Caco-2 (cell line): ENCODE measurements at regions of chr5 and their contacts with region 1.

Region 1: DNA sequence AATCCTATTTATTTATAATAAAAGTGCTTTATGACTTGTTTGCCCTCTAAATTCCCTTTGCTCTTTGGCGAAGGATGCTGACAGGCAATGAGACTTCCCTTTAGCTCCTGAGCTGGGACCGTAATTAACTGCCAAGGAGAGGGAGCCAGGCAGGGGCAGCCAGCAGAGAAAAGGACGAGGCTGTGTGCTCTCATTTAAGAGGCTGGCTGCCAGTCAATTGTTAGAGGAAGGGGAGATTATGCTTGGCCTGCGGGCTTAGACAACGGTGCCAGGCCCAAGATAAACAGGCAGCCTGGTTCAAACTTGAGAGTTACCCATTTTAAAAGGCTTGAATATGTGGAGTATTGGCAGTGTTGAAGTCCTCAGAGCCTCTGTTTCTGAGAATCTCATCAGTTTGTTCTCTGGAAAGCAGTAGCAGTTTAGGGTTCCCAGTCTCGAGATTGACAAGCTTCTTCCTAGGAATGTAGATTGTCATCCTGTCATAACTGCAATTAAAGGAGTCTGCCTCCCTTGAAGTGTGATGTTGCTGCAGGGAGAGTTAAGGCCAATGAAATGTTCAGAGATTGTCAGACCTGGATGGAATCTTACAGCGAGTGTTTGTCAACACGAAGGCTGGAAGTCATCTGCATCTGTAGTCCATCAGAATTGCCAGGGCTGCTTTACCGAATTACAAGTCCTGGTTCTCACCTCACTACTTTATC is 113.2 kb downstream of the JAKMIP2 start:
- DNase-seq: peak in 1 of 2 experiments; percentile 21
- H3K4me3 ChIP-seq: no peak overlapping the region
- H3K4me3 Mint-ChIP-seq: no peak overlapping the region
- H3K27ac Mint-ChIP-seq: no peak overlapping the region
- H3K4me1 ChIP-seq: peaks cover 33% of the 10 kb centered on the region
- H3K4me1 Mint-ChIP-seq: peaks cover 14% of the 10 kb centered on the region
- H3K27me3 ChIP-seq: no peaks in the 10 kb centered on the region
- H3K27me3 Mint-ChIP-seq: no peaks in the 10 kb centered on the region
- CTCF ChIP-seq: no peak

Region 2: DNA sequence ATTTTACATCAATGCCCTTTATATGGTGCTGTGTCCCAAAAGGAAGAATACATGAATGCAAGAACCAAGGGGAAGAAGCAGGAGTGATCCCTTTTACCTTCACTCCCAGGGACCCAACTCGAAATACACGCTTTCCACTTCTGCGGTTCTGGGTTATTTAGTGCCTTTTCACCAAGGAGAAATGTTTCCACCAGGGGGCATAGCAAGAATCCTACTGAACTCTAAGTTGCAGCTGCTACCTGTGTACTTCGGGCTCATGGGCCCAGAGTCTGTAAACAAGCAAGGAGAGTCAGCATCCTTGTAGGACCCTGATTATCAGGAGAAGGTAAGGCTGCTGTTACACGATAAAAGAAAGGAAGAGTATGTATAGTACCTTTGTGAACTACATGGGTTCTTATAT is 205.1 kb before region 1 on chr5:
- CTCF ChIA-PET with region 1: no interaction called
- POLR2A ChIA-PET with region 1: no interaction called
- intact Hi-C with region 1: no loop called
- DNase-seq: peak in 1 of 2 experiments; percentile 60
- H3K4me3 ChIP-seq: no peak overlapping the region
- H3K4me3 Mint-ChIP-seq: no peak overlapping the region
- H3K27ac Mint-ChIP-seq: no peak overlapping the region
- H3K4me1 ChIP-seq: peaks cover 10% of the 10 kb centered on the region
- H3K4me1 Mint-ChIP-seq: no peaks in the 10 kb centered on the region
- H3K27me3 ChIP-seq: no peaks in the 10 kb centered on the region
- H3K27me3 Mint-ChIP-seq: no peaks in the 10 kb centered on the region
- CTCF ChIP-seq: peak in 1 of 2 experiments; percentile 53

Region 3: DNA sequence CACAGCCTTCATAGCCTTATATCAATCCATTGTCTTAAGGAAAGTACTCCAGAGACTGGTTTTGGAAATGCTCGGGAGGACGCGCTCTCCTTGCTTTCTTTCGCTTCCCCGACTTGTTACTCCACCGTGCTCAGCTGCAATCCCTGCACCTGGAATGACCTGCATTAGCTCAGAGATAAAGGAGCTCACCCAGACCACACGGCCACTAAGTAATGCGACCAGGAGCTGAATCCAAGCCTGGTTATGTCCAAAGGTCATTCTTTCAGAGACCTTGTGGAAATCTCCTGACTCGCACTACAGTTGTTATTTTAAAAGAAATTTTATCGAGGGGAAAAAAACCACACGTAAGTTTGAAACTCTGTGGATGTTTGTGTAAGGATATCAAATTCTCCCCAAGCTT is 24.1 kb before region 1 on chr5:
- CTCF ChIA-PET with region 1: no interaction called
- POLR2A ChIA-PET with region 1: no interaction called
- intact Hi-C with region 1: loop called (anchors 1 kb)
- DNase-seq: peak; percentile 46 to 60
- H3K4me3 ChIP-seq: peak overlapping the region; percentile 28; the same call in 1 of the 2 replicates
- H3K4me3 Mint-ChIP-seq: peak overlapping the region; percentile 65
- H3K27ac Mint-ChIP-seq: no peak overlapping the region
- H3K4me1 ChIP-seq: peaks cover 3% of the 10 kb centered on the region; the same call in 1 of the 2 replicates
- H3K4me1 Mint-ChIP-seq: peaks cover 12% of the 10 kb centered on the region
- H3K27me3 ChIP-seq: no peaks in the 10 kb centered on the region
- H3K27me3 Mint-ChIP-seq: no peaks in the 10 kb centered on the region
- CTCF ChIP-seq: no peak

Region 4: GRCh38 chr5:147713550-147714295 is 44.4 kb after region 1 on chr5:
- CTCF ChIA-PET with region 1: no interaction called
- POLR2A ChIA-PET with region 1: no interaction called
- intact Hi-C with region 1: no loop called
- DNase-seq: no peak
- H3K4me3 ChIP-seq: no peak overlapping the region
- H3K4me3 Mint-ChIP-seq: no peak overlapping the region
- H3K27ac Mint-ChIP-seq: no peak overlapping the region
- H3K4me1 ChIP-seq: no peaks in the 10 kb centered on the region
- H3K4me1 Mint-ChIP-seq: no peaks in the 10 kb centered on the region
- H3K27me3 ChIP-seq: no peaks in the 10 kb centered on the region
- H3K27me3 Mint-ChIP-seq: peaks cover 3% of the 10 kb centered on the region
- CTCF ChIP-seq: no peak

Region 5: DNA sequence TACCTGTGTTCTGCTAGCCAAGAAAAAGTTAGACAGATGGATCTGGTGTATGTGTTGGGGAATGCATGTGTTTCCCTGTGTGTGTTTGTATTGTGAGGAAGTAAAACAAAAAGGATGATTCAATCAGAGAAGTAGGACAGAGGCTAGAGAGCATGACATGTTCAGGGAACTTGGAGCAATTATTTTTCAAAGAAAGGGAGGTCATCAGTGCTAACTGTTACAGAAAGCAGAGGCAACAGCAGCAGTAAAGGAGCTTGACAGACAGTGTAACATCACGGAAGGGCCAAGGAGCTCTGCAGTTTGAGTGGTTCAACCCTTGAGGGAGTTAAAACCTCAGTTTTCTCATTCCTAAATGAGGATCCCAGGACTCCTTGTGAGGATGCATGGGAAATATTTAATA is 149.0 kb after region 1 on chr5:
- CTCF ChIA-PET with region 1: no interaction called
- POLR2A ChIA-PET with region 1: no interaction called
- intact Hi-C with region 1: no loop called
- DNase-seq: no peak
- H3K4me3 ChIP-seq: no peak overlapping the region
- H3K4me3 Mint-ChIP-seq: no peak overlapping the region
- H3K27ac Mint-ChIP-seq: no peak overlapping the region
- H3K4me1 ChIP-seq: peaks cover 2% of the 10 kb centered on the region; the same call in 1 of the 2 replicates
- H3K4me1 Mint-ChIP-seq: peaks cover 10% of the 10 kb centered on the region
- H3K27me3 ChIP-seq: no peaks in the 10 kb centered on the region
- H3K27me3 Mint-ChIP-seq: no peaks in the 10 kb centered on the region
- CTCF ChIP-seq: no peak

Region 6: DNA sequence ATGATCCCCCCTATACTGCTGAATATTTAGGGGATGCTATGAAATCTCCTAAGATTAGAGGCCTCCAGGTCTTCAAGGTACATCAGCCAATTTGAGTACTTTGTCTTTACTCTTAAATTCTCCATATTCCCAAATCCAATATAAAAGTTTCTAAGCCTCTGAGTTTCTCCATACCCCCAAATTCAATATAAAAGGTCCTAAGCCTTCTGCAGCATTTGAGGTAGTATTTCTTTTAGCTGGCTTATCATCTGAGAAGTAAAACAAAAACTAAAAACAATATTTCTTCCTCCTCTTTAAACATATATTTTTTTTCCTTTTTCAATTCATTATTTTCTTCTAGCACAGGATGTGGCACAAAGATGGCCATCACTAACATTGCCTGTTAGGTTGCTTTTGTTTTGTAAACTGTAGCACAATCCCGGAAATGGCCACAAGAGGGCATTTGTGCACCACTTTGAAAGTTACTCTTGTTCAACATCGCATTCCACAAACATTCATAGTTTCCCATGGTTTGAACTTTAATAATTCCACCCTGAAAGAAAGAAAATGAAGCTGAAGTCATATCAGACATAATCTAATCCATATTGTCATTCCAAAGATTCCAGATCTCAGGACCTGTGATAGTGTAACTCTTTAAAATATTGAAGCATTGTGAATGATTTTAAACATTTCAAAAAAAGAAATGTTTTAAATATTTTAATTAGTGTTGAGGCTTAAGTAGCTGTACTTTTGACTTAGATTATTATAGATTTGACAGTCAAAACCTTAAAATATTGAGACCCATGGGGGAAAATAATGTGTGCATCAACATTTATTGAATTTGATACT is 188.2 kb after region 1 on chr5:
- CTCF ChIA-PET with region 1: no interaction called
- POLR2A ChIA-PET with region 1: no interaction called
- intact Hi-C with region 1: no loop called
- DNase-seq: peak; percentile 66 to 71
- H3K4me3 ChIP-seq: no peak overlapping the region
- H3K4me3 Mint-ChIP-seq: no peak overlapping the region
- H3K27ac Mint-ChIP-seq: no peak overlapping the region
- H3K4me1 ChIP-seq: no peaks in the 10 kb centered on the region; the same call in 1 of the 2 replicates
- H3K4me1 Mint-ChIP-seq: peaks cover 6% of the 10 kb centered on the region
- H3K27me3 ChIP-seq: no peaks in the 10 kb centered on the region
- H3K27me3 Mint-ChIP-seq: no peaks in the 10 kb centered on the region
- CTCF ChIP-seq: peak; percentile 77 to 81